ENCODE measurements at regions of chr21 and their contacts with region 1.

Region 1: GRCh38 chr21:26865857-26866256 is 20.6 kb upstream of the ADAMTS1 start:
- DNase-seq: no peak
- ATAC-seq: no peak

Region 2: DNA sequence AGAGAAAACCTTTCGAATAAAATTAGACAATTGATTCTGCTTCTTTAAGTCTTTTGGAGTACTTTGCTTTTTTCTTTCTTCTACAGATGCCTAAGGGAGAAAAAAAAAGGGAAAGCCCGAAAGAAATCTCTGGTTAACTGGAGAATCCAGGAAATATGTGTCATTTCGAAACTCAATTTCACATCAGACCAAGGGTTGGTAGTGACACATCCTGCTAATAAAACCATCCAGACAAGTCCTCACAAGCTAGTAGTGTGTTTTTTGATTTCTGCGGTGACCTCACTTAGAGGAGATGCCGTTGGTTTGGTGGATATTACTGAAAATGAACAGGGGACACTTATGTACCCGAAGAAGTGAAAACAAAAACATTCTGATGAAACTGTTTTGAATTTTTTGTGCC is 827.5 kb after region 1 on chr21:
- intact Hi-C with region 1: loop called (anchors 10 kb)
- DNase-seq: no peak
- ATAC-seq: no peak